GM12878 (cell line): ENCODE measurements at regions of chr6 and their contacts with region 1.

Region 1: GRCh38 chr6:52063584-52064344 is 23.6 kb downstream of the PKHD1 start:
- DNase-seq: peak; percentile 42
- ATAC-seq: peak; percentile 99
- H3K4me3 ChIP-seq: no peak overlapping the region
- H3K27ac ChIP-seq: no peak overlapping the region; the same call in 1 of the 2 replicates
- H3K4me1 ChIP-seq: peaks cover 4% of the 10 kb centered on the region
- H3K27me3 ChIP-seq: 0 out of 4 replicates have a peak, but pooled peaks cover 0 to 4% of the 10 kb centered on the region in 2 experiments
- CTCF ChIP-seq: peak; percentile 59 to 68 (median 64)
- EP300 ChIP-seq: no peak
- POLR2A ChIP-seq: no peak
- RAD21 ChIP-seq: peak; percentile 52

Region 2: DNA sequence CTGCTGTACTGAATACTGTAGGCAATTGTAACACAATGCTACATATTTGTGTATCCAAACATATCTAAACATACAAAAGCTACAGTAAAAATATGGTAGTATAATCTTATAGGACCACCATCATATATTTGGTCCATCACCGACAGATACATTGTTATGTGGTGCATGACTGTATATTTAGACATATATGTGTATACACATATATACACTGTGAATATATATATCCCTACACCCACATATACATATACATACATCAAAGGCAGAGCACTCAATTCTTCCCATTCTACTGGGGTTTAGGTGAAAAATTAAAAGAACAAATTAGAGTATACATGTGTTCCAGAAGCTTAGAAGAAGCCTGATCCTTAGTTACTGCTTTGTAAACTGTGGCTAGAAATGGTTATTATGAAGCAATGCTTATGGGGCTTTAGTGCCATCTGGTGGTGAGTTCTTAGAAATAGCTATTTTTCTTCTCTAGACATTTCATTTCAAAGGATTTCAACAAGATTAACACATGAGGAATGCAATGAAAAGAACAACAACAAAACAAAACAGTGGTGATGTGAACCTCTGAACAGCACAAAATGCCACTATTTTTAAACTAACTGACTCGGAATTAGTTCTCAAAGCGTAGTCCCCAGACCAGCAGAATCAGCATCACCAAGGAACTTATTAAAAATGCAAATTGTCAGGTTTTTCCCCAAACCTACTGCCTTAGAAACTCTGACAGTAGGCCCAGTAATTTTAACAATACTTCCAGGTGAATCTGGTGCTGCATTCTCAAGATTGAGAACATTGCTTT is 14.3 kb before region 1 on chr6:
- CTCF ChIA-PET with region 1: interaction called, 27 read pairs
- POLR2A ChIA-PET with region 1: no interaction called
- RAD21 ChIA-PET with region 1: interaction called, 3 read pairs
- SMC1A ChIA-PET with region 1: interaction called, 7 read pairs
- in situ Hi-C with region 1: no loop called
- intact Hi-C with region 1: no loop called
- DNase-seq: peak; percentile 11
- ATAC-seq: peak; percentile 75
- H3K4me3 ChIP-seq: no peak overlapping the region
- H3K27ac ChIP-seq: no peak overlapping the region
- H3K4me1 ChIP-seq: no peaks in the 10 kb centered on the region
- H3K27me3 ChIP-seq: peaks cover 0 to 8% of the 10 kb centered on the region in 2 experiments; a peak in 2 of 4 replicates
- CTCF ChIP-seq: peak; percentile 56 to 70 (median 62)
- EP300 ChIP-seq: no peak
- POLR2A ChIP-seq: no peak
- RAD21 ChIP-seq: peak; percentile 67

Region 3: DNA sequence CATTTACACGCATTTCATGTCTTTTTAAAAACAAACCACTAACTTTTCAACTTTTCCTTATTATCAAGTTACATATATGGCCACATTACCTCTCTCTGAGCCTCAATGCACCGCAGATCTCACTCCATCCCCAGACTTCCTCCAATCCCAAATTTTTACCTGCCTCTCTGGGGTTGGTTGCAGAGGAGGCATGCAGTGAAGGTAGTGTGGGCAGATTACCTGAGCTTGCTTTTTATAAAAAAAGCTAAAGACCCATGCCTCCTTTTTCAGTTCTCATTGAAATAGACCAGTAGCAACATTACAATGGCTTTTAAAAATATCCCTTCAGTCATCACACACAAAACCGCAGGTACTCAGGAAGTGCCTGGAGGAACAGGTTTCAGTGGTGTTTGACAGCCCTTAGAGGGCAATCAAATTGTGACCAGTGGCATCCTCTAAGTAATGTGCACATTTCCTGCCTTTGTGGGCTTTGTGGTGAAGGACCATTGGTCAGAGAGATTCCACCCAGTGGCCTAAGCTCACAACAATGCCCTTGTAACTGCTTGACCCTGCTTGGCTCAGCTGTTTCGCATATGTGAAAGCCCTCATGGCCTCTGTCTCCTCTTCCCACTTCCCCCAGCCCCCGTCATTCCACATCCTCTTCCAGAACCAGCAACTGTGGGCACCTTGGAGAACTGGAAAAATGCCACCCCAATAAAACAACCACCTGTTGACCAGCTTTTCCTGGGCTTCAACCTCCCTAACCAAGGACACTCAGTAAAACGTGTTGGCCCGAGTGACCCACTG is 92.2 kb after region 1 on chr6:
- CTCF ChIA-PET with region 1: interaction called, 3 read pairs
- POLR2A ChIA-PET with region 1: no interaction called
- RAD21 ChIA-PET with region 1: no interaction called
- SMC1A ChIA-PET with region 1: no interaction called
- in situ Hi-C with region 1: no loop called
- intact Hi-C with region 1: loop called (anchors 5 kb)
- DNase-seq: peak; percentile 87
- ATAC-seq: peak; percentile 95
- H3K4me3 ChIP-seq: no peak overlapping the region
- H3K27ac ChIP-seq: no peak overlapping the region
- H3K4me1 ChIP-seq: peaks cover 25% of the 10 kb centered on the region
- H3K27me3 ChIP-seq: 0 out of 4 replicates have a peak, but pooled peaks cover 0 to 2% of the 10 kb centered on the region in 2 experiments
- CTCF ChIP-seq: no peak
- EP300 ChIP-seq: peak; percentile 51 to 52; a peak in 1 of 4 replicates
- POLR2A ChIP-seq: no peak
- RAD21 ChIP-seq: no peak